HEK293 (cell line): ENCODE measurements at regions of chr7 and their contacts with region 1.

Region 1: GRCh38 chr7:17769918-17770317 is 170.4 kb downstream of the SNX13 start:
- H3K4me3 ChIP-seq: no peak overlapping the region
- H3K27ac ChIP-seq: no peak overlapping the region
- H3K4me1 ChIP-seq: peaks cover 7% of the 10 kb centered on the region
- CTCF ChIP-seq: no peak

Region 2: DNA sequence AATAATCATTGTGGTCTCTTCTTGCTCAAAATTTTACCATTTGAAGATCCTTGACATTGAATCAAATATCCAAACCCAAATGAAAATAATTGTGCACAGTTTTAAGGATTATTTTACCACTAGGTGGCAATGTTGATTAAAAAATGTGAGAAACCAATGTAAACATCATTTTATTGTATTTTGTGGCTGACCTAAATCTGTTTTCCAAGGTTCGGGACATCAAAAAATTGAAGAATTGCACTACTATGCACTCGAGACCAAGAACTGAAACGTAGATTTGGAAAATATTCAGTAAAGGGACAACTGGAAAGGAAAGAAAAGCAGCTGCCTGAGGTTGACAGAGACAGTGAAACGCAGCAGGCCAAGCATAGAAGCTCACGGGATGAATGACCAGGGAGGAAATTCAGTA is 89.0 kb before region 1 on chr7:
- CTCF ChIA-PET with region 1: interaction called, 16 read pairs
- POLR2A ChIA-PET with region 1: no interaction called
- H3K4me3 ChIP-seq: no peak overlapping the region
- H3K27ac ChIP-seq: no peak overlapping the region
- H3K4me1 ChIP-seq: no peaks in the 10 kb centered on the region
- CTCF ChIP-seq: no peak

Region 3: GRCh38 chr7:17706734-17707133 is 63.2 kb before region 1 on chr7:
- CTCF ChIA-PET with region 1: interaction called, 11 read pairs
- POLR2A ChIA-PET with region 1: no interaction called
- H3K4me3 ChIP-seq: no peak overlapping the region
- H3K27ac ChIP-seq: no peak overlapping the region
- H3K4me1 ChIP-seq: no peaks in the 10 kb centered on the region
- CTCF ChIP-seq: no peak

Region 4: GRCh38 chr7:17758008-17758407 is 11.9 kb before region 1 on chr7:
- CTCF ChIA-PET with region 1: interaction called, 10 read pairs
- POLR2A ChIA-PET with region 1: no interaction called
- H3K4me3 ChIP-seq: no peak overlapping the region
- H3K27ac ChIP-seq: no peak overlapping the region
- H3K4me1 ChIP-seq: no peaks in the 10 kb centered on the region
- CTCF ChIP-seq: no peak

Region 5: GRCh38 chr7:17991866-17992648 is 222.1 kb after region 1 on chr7:
- CTCF ChIA-PET with region 1: interaction called, 15 read pairs
- POLR2A ChIA-PET with region 1: no interaction called
- H3K4me3 ChIP-seq: no peak overlapping the region
- H3K27ac ChIP-seq: no peak overlapping the region
- H3K4me1 ChIP-seq: no peaks in the 10 kb centered on the region
- CTCF ChIP-seq: no peak

Region 6: GRCh38 chr7:18345641-18346234 is 575.8 kb after region 1 on chr7:
- CTCF ChIA-PET with region 1: interaction called, 42 read pairs
- POLR2A ChIA-PET with region 1: no interaction called
- H3K4me3 ChIP-seq: no peak overlapping the region
- H3K27ac ChIP-seq: no peak overlapping the region
- H3K4me1 ChIP-seq: no peaks in the 10 kb centered on the region
- CTCF ChIP-seq: 0 out of 2 replicates have a peak, but pooled peaks have one; percentile 52